Left cardiac atrium (tissue), 4 donors: ENCODE measurements at regions of chr1 and their contacts with region 1.

Region 1: GRCh38 chr1:199684686-199685273 is 342.7 kb upstream of the NR5A2 start:
- DNase-seq: no peak
- ATAC-seq: peak in 1 of 2 donors; percentile 73

Region 2: DNA sequence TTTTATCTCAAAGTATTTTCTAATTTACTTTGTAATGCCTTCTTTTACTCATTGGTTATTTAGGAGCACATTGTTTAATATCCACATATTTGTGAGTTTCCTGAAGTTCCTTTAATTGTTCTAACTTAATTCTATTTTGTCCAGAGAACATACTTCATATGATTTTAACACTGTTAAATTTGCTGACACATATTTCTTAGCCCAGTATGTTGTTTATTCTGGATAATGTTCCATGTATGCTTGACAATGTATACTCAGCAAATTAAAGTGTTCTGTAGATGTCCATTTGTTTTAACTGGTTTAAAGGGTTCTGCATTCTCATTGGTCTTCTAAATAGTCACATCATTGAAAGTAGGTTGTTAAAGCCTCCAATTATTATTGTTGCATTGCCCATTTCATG is 301.0 kb before region 1 on chr1:
- intact Hi-C with region 1: no loop called
- DNase-seq: no peak
- ATAC-seq: no peak

Region 3: GRCh38 chr1:199593475-199593874 is 91.3 kb before region 1 on chr1:
- intact Hi-C with region 1: no loop called
- DNase-seq: no peak
- ATAC-seq: no peak

Region 4: DNA sequence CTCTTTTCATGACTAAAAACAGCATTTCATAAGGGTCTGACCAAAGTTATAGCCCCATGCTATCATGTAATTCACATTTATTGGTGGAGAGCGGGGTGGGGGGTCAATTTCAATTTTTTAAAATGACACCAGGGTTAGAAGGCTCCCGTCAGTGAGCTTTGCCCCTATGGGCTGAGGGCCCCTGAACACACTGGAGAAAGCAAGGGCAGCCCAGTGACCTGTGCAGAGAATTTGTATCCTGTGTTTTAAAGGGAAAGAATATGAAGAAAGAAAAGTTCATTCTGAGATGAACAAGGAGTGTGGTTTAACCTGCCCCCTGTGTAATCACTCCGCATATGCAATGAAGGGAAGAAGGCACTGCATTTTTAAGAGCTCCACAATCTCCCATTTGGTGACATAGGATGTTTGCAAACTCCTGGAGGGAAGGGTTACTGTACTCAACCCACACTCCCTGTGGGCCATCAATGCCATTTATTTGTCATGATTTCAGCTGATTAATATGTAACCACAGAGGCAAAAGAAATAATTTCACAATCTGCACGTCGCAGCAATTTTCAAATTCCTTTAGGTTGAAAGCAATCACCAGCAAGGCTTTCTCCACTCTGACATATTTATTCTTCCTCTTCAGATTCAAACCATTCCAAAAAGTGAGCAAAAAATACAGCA is 629.4 kb after region 1 on chr1:
- intact Hi-C with region 1: loop called in 1 of 2 experiments (anchors 5 kb)
- DNase-seq: no peak
- ATAC-seq: no peak

Region 5: GRCh38 chr1:200488375-200489165 is 803.8 kb after region 1 on chr1:
- intact Hi-C with region 1: loop called (anchors 5 kb)
- DNase-seq: no peak
- ATAC-seq: peak; percentile 59 to 74

Region 6: DNA sequence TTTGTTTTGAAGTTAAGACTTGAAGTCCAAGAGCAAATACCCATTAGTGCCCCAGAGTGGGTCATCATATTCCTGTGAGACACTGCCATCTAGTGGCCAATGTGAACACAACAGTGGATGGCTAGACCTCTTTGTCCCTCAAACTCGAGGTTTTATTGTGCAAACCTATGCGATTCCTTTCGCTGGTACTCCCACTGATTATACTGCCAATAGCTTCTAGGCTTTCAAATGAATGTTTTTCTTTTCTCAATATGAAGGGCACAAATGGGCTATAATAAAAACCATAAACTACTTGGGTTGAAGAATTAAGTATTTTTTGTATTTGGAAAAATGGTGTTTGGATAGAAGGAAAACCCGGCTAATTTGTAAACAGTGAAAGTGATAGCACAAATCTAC is 825.4 kb after region 1 on chr1:
- intact Hi-C with region 1: loop called in 1 of 2 experiments (anchors 1 kb)
- DNase-seq: peak; percentile 57
- ATAC-seq: peak in 1 of 2 donors; percentile 90